Dorsolateral prefrontal cortex (tissue), 120 donors: ENCODE measurements at regions of chr4 and their contacts with region 1.

Region 1: DNA sequence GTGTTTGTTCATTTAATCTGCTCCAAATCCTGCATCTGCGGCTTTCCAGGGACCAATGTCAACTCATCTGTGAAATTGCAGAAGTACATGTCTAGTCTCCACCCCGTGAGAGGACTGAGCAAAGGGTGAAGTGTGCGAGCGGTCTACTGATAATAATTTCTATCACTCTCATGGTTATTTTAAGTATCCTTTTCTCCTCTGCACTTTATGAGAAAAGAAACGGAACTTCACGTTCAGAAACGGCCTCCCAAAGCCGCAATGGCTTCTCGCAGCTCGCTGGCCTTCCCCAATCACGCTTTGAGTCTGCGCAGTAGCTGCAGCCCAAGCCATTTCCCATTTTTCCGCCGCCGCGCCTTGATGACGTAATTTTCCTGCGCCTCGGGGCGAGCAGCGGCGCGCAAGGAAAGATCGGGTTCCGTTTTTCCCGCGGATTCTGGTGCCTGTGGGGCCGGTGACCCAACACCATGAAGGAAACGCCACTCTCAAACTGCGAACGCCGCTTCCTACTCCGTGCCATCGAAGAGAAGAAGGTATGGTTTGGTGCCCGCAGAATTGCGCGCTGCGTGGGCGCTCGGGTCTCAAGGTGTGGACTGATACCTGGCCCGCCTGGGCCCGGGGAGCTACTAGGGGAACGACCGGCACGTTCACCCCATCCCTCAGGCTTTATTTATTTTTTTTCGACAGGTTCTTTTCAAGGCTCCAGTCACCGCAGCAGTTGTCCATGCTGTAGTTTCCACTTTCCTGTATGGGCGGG is at the start of gene EXOSC9:
- DNase-seq: peak; percentile 76 to 92 (median 85)
- H3K4me3 ChIP-seq: peak within 1 kb of the TSS; percentile 68 to 100 (median 91)
- H3K27ac ChIP-seq: peak within 1 kb of the TSS; percentile 63 to 98 (median 93)
- H3K27me3 ChIP-seq: no peaks in the 10 kb centered on the region
- CTCF ChIP-seq: peak in 31 of 56 donors; percentile 4 to 62 (median 26)
- total RNA-seq, gene EXOSC9: 10.5 to 25.6 (median 17.5) TPM

Region 2: GRCh38 chr4:121484633-121485032 is 316.5 kb before region 1 on chr4:
- intact Hi-C with region 1: no loop called
- DNase-seq: no peak
- H3K4me3 ChIP-seq: no peak overlapping the region
- H3K27ac ChIP-seq: no peak overlapping the region
- H3K27me3 ChIP-seq: peaks cover 0 to 4% (median 0%) of the 10 kb centered on the region in 45 donors
- CTCF ChIP-seq: peak in 49 of 56 donors; percentile 12 to 55 (median 38)

Region 3: GRCh38 chr4:121696581-121697461 is 104.3 kb before region 1 on chr4 and contains the start of gene ANXA5:
- intact Hi-C with region 1: loop called (anchors 1 to 5 kb)
- DNase-seq: peak; percentile 63 to 90 (median 72)
- H3K4me3 ChIP-seq: peak within 1 kb of the TSS; percentile 55 to 98 (median 89)
- H3K27ac ChIP-seq: peak within 1 kb of the TSS; percentile 52 to 98 (median 89)
- H3K27me3 ChIP-seq: no peaks in the 10 kb centered on the region
- CTCF ChIP-seq: peak in 47 of 56 donors; percentile 14 to 68 (median 42)
- total RNA-seq, gene ANXA5: 48.4 to 141 (median 84.7) TPM

Region 4: DNA sequence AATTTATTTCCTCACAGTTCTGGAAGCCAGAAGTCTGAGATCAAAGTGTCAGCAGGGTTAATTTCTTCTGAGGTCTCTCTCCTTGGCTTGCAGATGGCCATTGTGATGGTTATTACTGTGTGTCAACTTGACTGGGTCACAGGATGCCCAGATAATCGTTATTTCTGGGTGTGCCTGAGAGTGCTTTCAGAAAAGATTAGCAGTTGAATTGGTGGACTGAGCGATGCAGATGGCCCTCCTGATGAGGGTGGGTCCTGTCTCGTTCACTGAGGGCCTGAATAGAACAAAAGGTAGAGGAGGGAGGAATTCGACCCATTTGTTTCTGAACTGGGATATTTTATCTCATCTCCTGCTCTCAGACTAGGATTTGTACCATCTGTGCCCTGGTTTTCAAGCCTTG is 51.9 kb before region 1 on chr4:
- intact Hi-C with region 1: no loop called
- DNase-seq: no peak
- H3K4me3 ChIP-seq: no peak overlapping the region
- H3K27ac ChIP-seq: no peak overlapping the region
- H3K27me3 ChIP-seq: no peaks in the 10 kb centered on the region
- CTCF ChIP-seq: no peak

Region 5: GRCh38 chr4:121764707-121765593 is 36.2 kb before region 1 on chr4 and contains the start of gene SMIM43:
- intact Hi-C with region 1: loop called in 1 of 2 experiments (anchors 2 kb)
- DNase-seq: peak in 2 of 10 donors; percentile 26 to 48
- H3K4me3 ChIP-seq: peak within 1 kb of the TSS in 58 of 59 donors; percentile 28 to 69 (median 56)
- H3K27ac ChIP-seq: peak within 1 kb of the TSS in 45 of 59 donors; percentile 2 to 84 (median 60)
- H3K27me3 ChIP-seq: peaks cover 0 to 30% (median 15%) of the 10 kb centered on the region in 45 donors
- CTCF ChIP-seq: no peak
- total RNA-seq, gene SMIM43: 12.2 to 62.2 (median 37.5) TPM

Region 6: GRCh38 chr4:121823505-121824170 is 22.5 kb after region 1 on chr4 and contains the start of gene CCNA2:
- intact Hi-C with region 1: loop called in 1 of 2 experiments (anchors 2 kb)
- DNase-seq: peak; percentile 94 to 98 (median 97)
- H3K4me3 ChIP-seq: peak within 1 kb of the TSS; percentile 46 to 85 (median 70)
- H3K27ac ChIP-seq: peak within 1 kb of the TSS in 48 of 59 donors; percentile 10 to 87 (median 72)
- H3K27me3 ChIP-seq: no peaks in the 10 kb centered on the region
- CTCF ChIP-seq: peak in 21 of 56 donors; percentile 5 to 48 (median 23)
- total RNA-seq, gene CCNA2: 1.1 to 11.7 (median 2.7) TPM